ENCODE measurements at regions of chr7 and their contacts with region 1.

Region 1: GRCh38 chr7:88111136-88111743 is 108.6 kb downstream of the SRI start:
- DNase-seq: peak; percentile 45
- ATAC-seq: no peak
- H3K4me3 ChIP-seq: no peak overlapping the region
- H3K27ac ChIP-seq: no peak overlapping the region
- H3K4me1 ChIP-seq: no peaks in the 10 kb centered on the region
- H3K27me3 ChIP-seq: no peaks in the 10 kb centered on the region
- CTCF ChIP-seq: peak; percentile 57; the same call in 1 of the 2 replicates

Region 2: GRCh38 chr7:87506246-87507180 is 604.7 kb before region 1 on chr7:
- CTCF ChIA-PET with region 1: no interaction called
- POLR2A ChIA-PET with region 1: no interaction called
- in situ Hi-C with region 1: no loop called
- intact Hi-C with region 1: loop called (anchors 5 kb)
- DNase-seq: no peak
- ATAC-seq: no peak
- H3K4me3 ChIP-seq: no peak overlapping the region
- H3K27ac ChIP-seq: no peak overlapping the region
- H3K4me1 ChIP-seq: no peaks in the 10 kb centered on the region
- H3K27me3 ChIP-seq: no peaks in the 10 kb centered on the region
- CTCF ChIP-seq: peak; percentile 54; the same call in 1 of the 2 replicates

Region 3: GRCh38 chr7:87797798-87798403 is 313.3 kb before region 1 on chr7:
- CTCF ChIA-PET with region 1: no interaction called
- POLR2A ChIA-PET with region 1: no interaction called
- in situ Hi-C with region 1: no loop called
- intact Hi-C with region 1: loop called (anchors 5 kb)
- DNase-seq: peak; percentile 58
- ATAC-seq: peak; percentile 74
- H3K4me3 ChIP-seq: no peak overlapping the region
- H3K27ac ChIP-seq: no peak overlapping the region
- H3K4me1 ChIP-seq: no peaks in the 10 kb centered on the region
- H3K27me3 ChIP-seq: no peaks in the 10 kb centered on the region
- CTCF ChIP-seq: peak; percentile 69; the same call in 1 of the 2 replicates

Region 4: DNA sequence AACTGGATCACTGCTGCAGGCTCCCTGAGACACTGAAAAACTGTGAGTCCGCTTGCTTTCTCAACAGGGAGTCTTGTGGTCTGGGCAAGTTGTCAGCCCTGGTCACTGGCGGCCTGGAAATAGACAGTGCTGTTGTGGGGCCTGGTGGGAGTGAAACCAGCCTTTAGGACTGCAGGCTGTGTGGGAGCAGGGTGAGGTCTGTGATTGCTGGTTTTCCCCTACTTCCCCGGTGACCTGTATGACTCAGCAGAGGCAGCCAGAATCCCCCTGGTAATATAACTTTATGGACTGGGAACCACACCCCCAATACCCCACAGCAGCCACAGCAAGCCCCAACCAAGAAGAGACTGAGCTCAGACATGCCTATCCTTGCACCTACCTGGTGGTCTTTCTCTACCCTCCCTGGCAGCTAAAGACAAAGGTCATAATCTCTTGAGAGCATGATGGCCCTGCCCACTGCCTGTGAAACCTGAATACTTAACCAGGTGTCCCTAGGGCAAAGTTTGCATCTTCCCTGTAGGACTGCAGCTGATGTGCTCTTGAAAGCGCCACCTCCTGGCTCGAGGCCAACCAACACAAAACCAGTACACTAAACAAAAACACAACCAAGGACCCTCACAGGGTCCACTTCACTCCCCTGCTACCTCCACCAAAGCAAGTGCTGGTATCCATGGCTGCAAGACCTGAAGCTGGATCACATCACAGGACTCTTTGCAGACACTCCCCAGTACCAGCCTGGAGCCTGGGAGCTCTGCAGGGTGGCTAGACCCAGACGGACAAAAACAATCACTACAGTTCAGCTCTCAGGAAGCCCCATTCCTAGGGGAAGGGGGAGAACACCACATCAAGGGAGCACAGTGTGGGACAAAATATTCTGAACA is 184.4 kb before region 1 on chr7:
- CTCF ChIA-PET with region 1: no interaction called
- POLR2A ChIA-PET with region 1: no interaction called
- in situ Hi-C with region 1: no loop called
- intact Hi-C with region 1: loop called (anchors 10 kb)
- DNase-seq: no peak
- ATAC-seq: no peak; the same call in 1 of the 2 replicates
- H3K4me3 ChIP-seq: no peak overlapping the region
- H3K27ac ChIP-seq: no peak overlapping the region
- H3K4me1 ChIP-seq: no peaks in the 10 kb centered on the region
- H3K27me3 ChIP-seq: no peaks in the 10 kb centered on the region
- CTCF ChIP-seq: no peak

Measured in Panc1 (cell line).